ENCODE measurements at regions of chr12 and their contacts with region 1.

Region 1: GRCh38 chr12:78584695-78585531 is 279.7 kb upstream of the SYT1 start:
- DNase-seq: peak; percentile 19
- H3K4me3 ChIP-seq: no peak overlapping the region
- H3K27ac ChIP-seq: no peak overlapping the region
- H3K4me1 ChIP-seq: no peaks in the 10 kb centered on the region
- H3K27me3 ChIP-seq: no peaks in the 10 kb centered on the region
- CTCF ChIP-seq: peak; percentile 31 to 52

Region 2: DNA sequence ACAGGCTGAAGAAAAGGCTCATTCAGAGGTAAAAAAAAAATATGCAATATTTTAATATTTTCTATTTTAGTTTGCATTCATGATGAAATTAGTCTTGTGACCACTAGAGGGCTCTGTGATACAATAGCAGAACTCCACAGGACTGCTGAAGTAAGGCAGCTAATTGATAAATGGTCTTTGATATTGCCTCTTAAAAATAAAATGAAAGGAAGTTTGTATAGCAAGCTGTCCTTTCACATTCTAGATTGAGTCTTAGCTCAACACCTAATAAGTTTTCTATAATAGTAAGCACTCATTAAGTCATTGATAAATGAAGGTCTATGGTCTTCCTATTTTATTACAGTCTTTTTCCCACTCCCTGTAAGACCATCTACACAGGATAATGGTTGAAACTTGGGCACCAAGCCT is 438.5 kb before region 1 on chr12:
- CTCF ChIA-PET with region 1: no interaction called
- dilution Hi-C with region 1: no loop called
- in situ Hi-C with region 1: no loop called
- intact Hi-C with region 1: loop called (anchors 5 kb)
- DNase-seq: peak; percentile 4
- H3K4me3 ChIP-seq: no peak overlapping the region
- H3K27ac ChIP-seq: no peak overlapping the region
- H3K4me1 ChIP-seq: no peaks in the 10 kb centered on the region
- H3K27me3 ChIP-seq: no peaks in the 10 kb centered on the region
- CTCF ChIP-seq: peak; percentile 60 to 69

Region 3: DNA sequence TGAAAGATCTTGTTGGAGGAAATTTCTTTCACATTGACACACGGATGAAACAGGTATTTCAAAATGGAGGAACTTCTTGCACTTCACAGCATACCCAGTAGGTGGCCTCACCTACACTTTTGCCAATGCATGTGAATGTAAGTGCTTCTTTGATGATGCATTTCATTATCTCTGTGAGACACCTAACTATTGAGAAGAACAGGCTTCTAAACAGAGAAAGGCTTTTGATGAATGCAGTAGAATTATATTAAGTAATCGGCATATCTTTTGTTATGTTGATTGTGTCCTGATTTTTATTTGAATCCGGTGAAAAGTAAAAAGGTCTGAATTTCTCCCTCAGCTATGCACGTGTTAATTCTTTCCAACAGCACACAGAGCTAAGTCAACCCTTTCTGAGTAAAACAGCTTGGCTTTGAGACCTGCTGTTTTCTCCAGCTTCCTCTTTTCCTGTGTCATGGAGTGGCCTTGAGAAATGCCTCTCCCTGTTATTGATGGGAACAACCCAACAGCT is 355.3 kb before region 1 on chr12:
- CTCF ChIA-PET with region 1: no interaction called
- dilution Hi-C with region 1: no loop called
- in situ Hi-C with region 1: no loop called
- intact Hi-C with region 1: loop called (anchors 10 kb)
- DNase-seq: peak; percentile 53
- H3K4me3 ChIP-seq: no peak overlapping the region
- H3K27ac ChIP-seq: no peak overlapping the region
- H3K4me1 ChIP-seq: no peaks in the 10 kb centered on the region
- H3K27me3 ChIP-seq: no peaks in the 10 kb centered on the region
- CTCF ChIP-seq: peak; percentile 86 to 87

Region 4: GRCh38 chr12:78470354-78471195 is 114.3 kb before region 1 on chr12:
- CTCF ChIA-PET with region 1: no interaction called
- dilution Hi-C with region 1: no loop called
- in situ Hi-C with region 1: no loop called
- intact Hi-C with region 1: loop called (anchors 1 kb)
- DNase-seq: peak; percentile 32
- H3K4me3 ChIP-seq: no peak overlapping the region
- H3K27ac ChIP-seq: no peak overlapping the region
- H3K4me1 ChIP-seq: no peaks in the 10 kb centered on the region
- H3K27me3 ChIP-seq: no peaks in the 10 kb centered on the region
- CTCF ChIP-seq: peak; percentile 58 to 65

Measured in mammary epithelial cell (primary cell).